ENCODE measurements at regions of chr14 and their contacts with region 1.

Region 1: GRCh38 chr14:106491851-106492250 is 965.5 kb downstream of the TMEM121 start:
- DNase-seq: no peak
- ATAC-seq: no peak
- H3K4me3 ChIP-seq: no peak overlapping the region
- H3K27ac ChIP-seq: no peak overlapping the region
- H3K4me1 ChIP-seq: no peaks in the 10 kb centered on the region
- H3K27me3 ChIP-seq: peaks cover 0 to 4% of the 10 kb centered on the region in 2 experiments; a peak in 1 of 4 replicates
- CTCF ChIP-seq: peak; percentile 30 to 64 (median 58); a peak in 5 of 6 replicates
- EP300 ChIP-seq: no peak
- POLR2A ChIP-seq: no peak
- RAD21 ChIP-seq: peak; percentile 68

Region 2: GRCh38 chr14:106511006-106511799 is 19.4 kb after region 1 on chr14:
- CTCF ChIA-PET with region 1: interaction called, 43 read pairs
- POLR2A ChIA-PET with region 1: no interaction called
- RAD21 ChIA-PET with region 1: interaction called, 6 read pairs
- SMC1A ChIA-PET with region 1: interaction called, 7 read pairs
- in situ Hi-C with region 1: no loop called
- intact Hi-C with region 1: no loop called
- DNase-seq: no peak
- ATAC-seq: peak; percentile 78
- H3K4me3 ChIP-seq: no peak overlapping the region
- H3K27ac ChIP-seq: no peak overlapping the region
- H3K4me1 ChIP-seq: no peaks in the 10 kb centered on the region
- H3K27me3 ChIP-seq: peaks cover 0 to 2% of the 10 kb centered on the region in 2 experiments; a peak in 2 of 4 replicates
- CTCF ChIP-seq: no peak
- EP300 ChIP-seq: no peak
- POLR2A ChIP-seq: no peak
- RAD21 ChIP-seq: no peak

Region 3: GRCh38 chr14:106518054-106518943 is 26.4 kb after region 1 on chr14:
- CTCF ChIA-PET with region 1: interaction called, 10 read pairs
- POLR2A ChIA-PET with region 1: no interaction called
- RAD21 ChIA-PET with region 1: no interaction called
- SMC1A ChIA-PET with region 1: interaction called, 3 read pairs
- in situ Hi-C with region 1: no loop called
- intact Hi-C with region 1: no loop called
- DNase-seq: no peak
- ATAC-seq: peak; percentile 84
- H3K4me3 ChIP-seq: no peak overlapping the region
- H3K27ac ChIP-seq: no peak overlapping the region
- H3K4me1 ChIP-seq: peaks cover 10% of the 10 kb centered on the region
- H3K27me3 ChIP-seq: no peaks in the 10 kb centered on the region; a peak in 1 of 4 replicates
- CTCF ChIP-seq: peak; percentile 63 to 76 (median 75)
- EP300 ChIP-seq: no peak
- POLR2A ChIP-seq: no peak
- RAD21 ChIP-seq: peak; percentile 78